ENCODE measurements at regions of chr1 and their contacts with region 1.

Region 1: DNA sequence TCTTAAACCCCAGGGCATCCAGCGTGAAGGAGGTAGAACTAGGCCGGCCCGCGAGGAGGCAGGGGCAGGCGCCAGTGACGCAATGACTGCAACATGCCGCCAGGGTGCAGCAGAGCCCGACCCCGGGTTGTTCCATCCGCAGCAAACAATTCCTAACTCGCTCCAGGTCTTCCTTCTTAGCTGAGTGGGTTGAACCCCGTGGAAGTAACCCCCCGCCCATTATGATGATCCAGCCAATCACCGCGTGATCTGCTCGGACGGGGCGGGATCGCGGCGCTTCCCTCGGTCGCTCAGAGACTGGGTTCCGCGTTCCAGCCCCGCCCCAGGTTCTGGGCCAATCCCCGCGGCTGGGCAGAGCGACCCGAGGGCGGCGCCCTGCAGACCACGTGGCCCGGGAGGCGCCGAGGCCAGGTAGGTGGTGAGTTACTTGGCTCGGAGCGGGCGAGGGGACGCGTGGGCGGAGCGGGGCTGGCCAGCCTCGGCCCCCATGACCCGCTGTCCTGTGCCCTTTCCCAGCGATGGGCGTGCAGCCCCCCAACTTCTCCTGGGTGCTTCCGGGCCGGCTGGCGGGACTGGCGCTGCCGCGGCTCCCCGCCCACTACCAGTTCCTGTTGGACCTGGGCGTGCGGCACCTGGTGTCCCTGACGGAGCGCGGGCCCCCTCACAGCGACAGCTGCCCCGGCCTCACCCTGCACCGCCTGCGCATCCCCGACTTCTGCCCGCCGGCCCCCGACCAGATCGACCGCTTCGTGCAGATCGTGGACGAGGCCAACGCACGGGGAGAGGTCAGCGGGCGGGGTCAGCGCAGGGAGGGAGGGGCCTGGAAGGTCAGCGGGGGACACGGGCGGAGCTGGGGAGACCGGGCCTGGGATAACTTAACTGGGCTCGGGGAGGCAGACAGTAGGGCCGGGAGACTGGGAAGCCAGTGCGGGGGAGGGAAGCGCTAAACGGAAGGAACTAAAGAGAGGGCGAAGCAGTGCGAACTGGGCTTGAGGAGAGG is at the start of gene DUSP23:
- DNase-seq: peak; percentile 96
- ATAC-seq: peak; percentile 97
- H3K4me3 ChIP-seq: peak within 1 kb of the TSS; percentile 65 to 74 (median 71)
- H3K4me3 Mint-ChIP-seq: peak within 1 kb of the TSS; percentile 92
- H3K27ac ChIP-seq: peak within 1 kb of the TSS in 1 of 2 donors; percentile 53
- H3K27ac Mint-ChIP-seq: peak within 1 kb of the TSS; percentile 90
- H3K4me1 ChIP-seq: peaks cover 13 to 15% of the 10 kb centered on the region in 2 donors
- H3K4me1 Mint-ChIP-seq: peaks cover 9% of the 10 kb centered on the region
- H3K27me3 ChIP-seq: peaks cover 0 to 4% (median 0%) of the 10 kb centered on the region in 4 experiments
- H3K27me3 Mint-ChIP-seq: peaks cover 2% of the 10 kb centered on the region
- CTCF ChIP-seq: peak; percentile 78
- total RNA-seq, gene DUSP23: 9.5 and 9.6 TPM in 2 replicates

Region 2: DNA sequence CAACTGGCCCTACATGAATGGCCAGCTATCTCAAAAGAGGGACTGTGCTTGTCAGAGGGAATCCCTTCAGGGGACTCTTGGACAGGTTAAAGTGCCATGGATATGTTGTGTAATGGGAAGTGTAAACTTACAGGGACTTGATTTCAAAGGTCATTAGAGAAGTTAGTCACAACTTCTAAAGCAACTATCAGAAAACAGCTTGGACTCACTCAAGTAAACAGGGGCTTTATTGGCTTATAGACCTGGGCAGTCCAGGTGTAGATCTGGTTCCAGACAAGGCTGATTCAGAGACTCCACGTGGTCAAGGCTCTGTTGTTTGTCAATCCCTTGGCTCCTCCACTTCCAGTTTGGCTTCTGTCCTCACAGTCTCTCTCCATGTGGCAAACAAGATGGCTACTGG is 68.8 kb before region 1 on chr1:
- CTCF ChIA-PET with region 1: no interaction called
- POLR2A ChIA-PET with region 1: no interaction called
- intact Hi-C with region 1: no loop called
- DNase-seq: no peak
- ATAC-seq: no peak
- H3K4me3 ChIP-seq: no peak overlapping the region
- H3K4me3 Mint-ChIP-seq: no peak overlapping the region
- H3K27ac ChIP-seq: no peak overlapping the region
- H3K27ac Mint-ChIP-seq: no peak overlapping the region
- H3K4me1 ChIP-seq: no peaks in the 10 kb centered on the region
- H3K4me1 Mint-ChIP-seq: no peaks in the 10 kb centered on the region
- H3K27me3 ChIP-seq: no peaks in the 10 kb centered on the region
- H3K27me3 Mint-ChIP-seq: peaks cover 23% of the 10 kb centered on the region
- CTCF ChIP-seq: no peak

Region 3: GRCh38 chr1:159945483-159946241 is 164.8 kb after region 1 on chr1 and contains the start of gene IGSF9:
- CTCF ChIA-PET with region 1: interaction called, 5 read pairs
- POLR2A ChIA-PET with region 1: no interaction called
- intact Hi-C with region 1: loop called (anchors 1 kb)
- DNase-seq: peak; percentile 81
- ATAC-seq: peak; percentile 94
- H3K4me3 ChIP-seq: peak within 1 kb of the TSS in 4 of 5 experiments; percentile 8 to 46 (median 42)
- H3K4me3 Mint-ChIP-seq: peak within 1 kb of the TSS; percentile 60
- H3K27ac ChIP-seq: no peak within 1 kb of the TSS
- H3K27ac Mint-ChIP-seq: no peak within 1 kb of the TSS
- H3K4me1 ChIP-seq: peaks cover 15 to 18% of the 10 kb centered on the region in 2 donors
- H3K4me1 Mint-ChIP-seq: peaks cover 15% of the 10 kb centered on the region
- H3K27me3 ChIP-seq: peaks cover 0 to 34% (median 18%) of the 10 kb centered on the region in 4 experiments
- H3K27me3 Mint-ChIP-seq: peaks cover 40% of the 10 kb centered on the region
- CTCF ChIP-seq: peak; percentile 45
- total RNA-seq, gene IGSF9: 0.15 and 0.37 TPM in 2 replicates

Region 4: DNA sequence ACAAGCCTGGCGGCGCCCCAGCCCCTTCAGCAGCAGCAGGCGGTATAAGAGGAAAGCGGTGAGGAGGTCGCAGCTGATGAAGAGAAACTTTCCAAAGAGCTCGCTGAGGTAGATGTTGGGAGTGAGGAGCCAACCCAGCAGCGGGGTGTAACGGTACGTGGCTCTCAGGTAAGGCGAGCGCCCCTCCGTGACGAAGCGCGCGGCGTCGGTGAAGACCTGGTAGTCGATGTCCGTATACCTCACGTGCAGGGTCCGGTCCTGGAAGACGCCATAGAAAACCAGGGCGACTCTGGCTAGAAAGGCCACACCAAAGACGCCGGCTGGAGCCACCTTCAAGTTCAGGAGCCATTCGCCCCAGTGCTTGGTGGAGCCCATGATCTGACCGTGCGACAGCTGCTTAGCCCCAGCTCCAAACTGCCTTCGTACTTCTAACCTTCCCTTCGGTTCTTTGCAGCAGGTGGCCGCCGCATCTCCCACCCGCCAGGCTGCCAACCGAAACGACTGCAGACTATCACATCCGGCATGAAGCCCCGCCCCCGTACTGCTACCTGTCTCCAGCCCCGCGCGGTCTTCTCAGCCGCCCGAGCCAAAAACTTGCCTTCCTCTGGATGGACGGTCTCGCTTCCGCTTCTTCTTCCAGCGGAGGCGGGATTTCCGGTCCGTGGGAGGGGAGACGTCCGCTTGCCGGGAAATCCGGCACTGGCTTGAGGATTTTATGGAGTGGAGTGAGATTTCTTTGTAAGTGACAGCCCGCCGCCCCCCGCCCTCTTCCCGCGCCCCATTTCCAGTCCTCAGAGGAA is 250.7 kb after region 1 on chr1 and contains the start of gene PIGM:
- CTCF ChIA-PET with region 1: interaction called, 8 read pairs
- POLR2A ChIA-PET with region 1: interaction called, 3 read pairs
- intact Hi-C with region 1: loop called (anchors 1 kb)
- DNase-seq: peak; percentile 90
- ATAC-seq: peak; percentile 96
- H3K4me3 ChIP-seq: peak within 1 kb of the TSS; percentile 51 to 78 (median 74)
- H3K4me3 Mint-ChIP-seq: peak within 1 kb of the TSS; percentile 99
- H3K27ac ChIP-seq: peak within 1 kb of the TSS in 1 of 2 donors; percentile 57
- H3K27ac Mint-ChIP-seq: peak within 1 kb of the TSS; percentile 88
- H3K4me1 ChIP-seq: peaks cover 19 to 20% of the 10 kb centered on the region in 2 donors
- H3K4me1 Mint-ChIP-seq: peaks cover 27% of the 10 kb centered on the region
- H3K27me3 ChIP-seq: no peaks in the 10 kb centered on the region
- H3K27me3 Mint-ChIP-seq: no peaks in the 10 kb centered on the region
- CTCF ChIP-seq: no peak
- total RNA-seq, gene PIGM: 6.0 and 7.4 TPM in 2 replicates

Measured in B cell (primary cell).